ENCODE measurements at regions of chr19 and their contacts with region 1.

Region 1: GRCh38 chr19:40221858-40222837 is 4.0 kb upstream of the TTC9B start:
- DNase-seq: peak; percentile 95
- ATAC-seq: peak; percentile 39
- H3K4me3 ChIP-seq: peak overlapping the region; percentile 58 to 64
- H3K27ac ChIP-seq: peak overlapping the region; percentile 93
- H3K4me1 ChIP-seq: peaks cover 35 to 89% of the 10 kb centered on the region in 2 experiments; a peak in 3 of 4 replicates
- H3K27me3 ChIP-seq: no peaks in the 10 kb centered on the region
- CTCF ChIP-seq: peak; percentile 84 to 95 (median 90)
- POLR2A ChIP-seq: no peak
- RAD21 ChIP-seq: peak; percentile 96

Region 2: GRCh38 chr19:40139533-40140287 is 82.4 kb before region 1 on chr19:
- CTCF ChIA-PET with region 1: interaction called, 19 read pairs
- POLR2A ChIA-PET with region 1: no interaction called
- RAD21 ChIA-PET with region 1: interaction called, 3 to 4 read pairs
- intact Hi-C with region 1: loop called (anchors 1 kb)
- DNase-seq: peak; percentile 48
- ATAC-seq: peak; percentile 80
- H3K4me3 ChIP-seq: no peak overlapping the region
- H3K27ac ChIP-seq: no peak overlapping the region
- H3K4me1 ChIP-seq: no peaks in the 10 kb centered on the region
- H3K27me3 ChIP-seq: peaks cover 18% of the 10 kb centered on the region; the same call in 1 of the 2 replicates
- CTCF ChIP-seq: peak; percentile 60 to 91 (median 85)
- POLR2A ChIP-seq: no peak
- RAD21 ChIP-seq: peak; percentile 98

Region 3: DNA sequence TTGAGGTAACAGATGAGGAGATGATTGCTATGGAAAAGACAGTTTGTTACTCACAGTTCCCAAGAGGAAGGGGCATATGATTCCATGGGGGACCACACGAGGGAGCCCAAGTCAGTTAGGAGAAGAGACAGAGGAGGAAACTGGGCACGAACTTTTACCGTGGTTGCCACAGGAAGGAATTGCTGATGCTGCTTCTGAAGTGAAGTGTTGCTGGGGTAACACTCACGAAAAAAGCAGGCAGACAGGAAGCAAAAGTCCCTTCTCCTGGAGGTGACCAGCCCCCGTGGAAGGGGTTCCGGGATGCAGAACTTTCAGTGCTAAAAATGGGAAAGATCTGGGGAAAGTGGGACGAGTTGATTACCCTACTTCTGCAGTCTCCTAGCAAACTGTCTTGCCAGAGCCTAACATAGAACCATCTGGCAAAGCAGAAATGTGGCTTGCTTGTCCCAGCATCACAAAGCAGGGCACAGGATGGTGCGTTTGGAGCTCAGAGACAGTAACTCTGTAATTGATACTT is 66.3 kb before region 1 on chr19:
- CTCF ChIA-PET with region 1: interaction called, 10 read pairs
- POLR2A ChIA-PET with region 1: interaction called, 3 read pairs
- RAD21 ChIA-PET with region 1: no interaction called
- intact Hi-C with region 1: no loop called
- DNase-seq: no peak
- ATAC-seq: peak; percentile 93
- H3K4me3 ChIP-seq: no peak overlapping the region
- H3K27ac ChIP-seq: no peak overlapping the region
- H3K4me1 ChIP-seq: peaks cover 0 to 5% of the 10 kb centered on the region in 2 experiments; a peak in 2 of 4 replicates
- H3K27me3 ChIP-seq: no peaks in the 10 kb centered on the region
- CTCF ChIP-seq: peak; percentile 65 to 78 (median 66); a peak in 5 of 6 replicates
- POLR2A ChIP-seq: no peak
- RAD21 ChIP-seq: peak; percentile 72

Region 4: DNA sequence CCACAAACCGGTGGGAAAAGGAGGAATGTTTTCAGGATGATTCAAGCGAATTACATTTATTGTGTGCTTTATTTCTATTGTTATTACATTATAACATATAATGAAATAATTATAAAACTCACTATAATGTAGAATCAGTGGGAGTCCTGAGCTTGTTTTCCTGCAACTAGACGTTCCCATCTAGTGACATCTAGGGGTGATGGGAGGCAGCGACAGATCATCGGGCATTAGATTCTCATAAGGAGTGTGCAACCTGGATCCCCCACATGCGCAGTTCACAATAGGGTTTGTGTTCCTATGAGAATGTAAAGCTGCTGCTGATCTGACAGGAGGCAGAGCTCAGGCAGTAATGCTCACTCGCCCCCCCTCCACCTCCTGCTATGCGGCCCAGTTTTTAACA is 299.1 kb after region 1 on chr19:
- CTCF ChIA-PET with region 1: no interaction called
- POLR2A ChIA-PET with region 1: no interaction called
- RAD21 ChIA-PET with region 1: no interaction called
- intact Hi-C with region 1: no loop called
- DNase-seq: no peak
- ATAC-seq: no peak
- H3K4me3 ChIP-seq: no peak overlapping the region
- H3K27ac ChIP-seq: no peak overlapping the region
- H3K4me1 ChIP-seq: peaks cover 6 to 23% of the 10 kb centered on the region in 2 experiments
- H3K27me3 ChIP-seq: no peaks in the 10 kb centered on the region
- CTCF ChIP-seq: peak; percentile 40 to 46 (median 40); a peak in 4 of 6 replicates
- POLR2A ChIP-seq: no peak
- RAD21 ChIP-seq: peak; percentile 49

Region 5: DNA sequence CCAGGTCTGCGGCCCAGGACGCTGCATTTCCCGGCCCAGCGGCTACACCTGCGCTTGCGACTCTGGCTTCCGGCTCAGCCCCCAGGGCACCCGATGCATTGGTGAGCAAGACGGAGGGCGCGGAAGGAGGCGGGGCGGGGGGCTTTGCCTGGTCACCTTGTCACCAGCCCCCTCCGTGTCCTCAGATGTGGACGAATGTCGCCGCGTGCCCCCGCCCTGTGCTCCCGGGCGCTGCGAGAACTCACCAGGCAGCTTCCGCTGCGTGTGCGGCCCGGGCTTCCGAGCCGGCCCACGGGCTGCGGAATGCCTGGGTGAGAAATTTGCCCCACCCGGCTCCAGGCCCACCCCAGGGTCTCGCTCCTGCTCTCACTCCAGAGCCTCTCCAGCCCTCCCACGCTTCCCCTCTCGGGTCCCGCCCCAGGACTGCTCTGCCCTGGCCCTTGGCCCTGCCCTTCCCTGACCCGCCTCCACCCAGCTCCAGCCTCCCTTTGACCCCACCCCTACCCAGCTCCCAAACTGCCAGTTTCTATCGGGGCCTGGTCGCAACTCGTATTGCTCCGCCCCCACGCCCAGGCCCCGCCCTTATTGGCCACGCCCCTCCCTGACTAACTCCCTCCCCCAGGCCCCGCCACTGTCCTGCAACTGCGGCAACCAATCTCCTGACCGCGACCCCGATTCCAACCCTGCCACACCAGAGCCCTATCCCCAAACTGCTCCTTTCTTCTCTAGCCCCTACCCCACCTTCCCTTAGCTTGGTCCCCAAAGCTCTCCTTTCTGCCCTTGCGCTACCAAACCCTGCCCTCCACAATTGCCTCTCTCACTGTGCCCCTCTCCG is 387.6 kb after region 1 on chr19:
- CTCF ChIA-PET with region 1: no interaction called
- POLR2A ChIA-PET with region 1: no interaction called
- RAD21 ChIA-PET with region 1: no interaction called
- intact Hi-C with region 1: loop called (anchors 5 kb)
- DNase-seq: peak; percentile 88
- ATAC-seq: peak; percentile 57
- H3K4me3 ChIP-seq: peak overlapping the region; percentile 61 to 67
- H3K27ac ChIP-seq: peak overlapping the region; percentile 85
- H3K4me1 ChIP-seq: peaks cover 41 to 97% of the 10 kb centered on the region in 2 experiments
- H3K27me3 ChIP-seq: no peaks in the 10 kb centered on the region
- CTCF ChIP-seq: no peak
- POLR2A ChIP-seq: no peak
- RAD21 ChIP-seq: no peak